Dendritic cell treated with granulocyte-macrophage colony-stimulating factor and Interleukin-4, amounts not matched to agents 40 ng/mL and 50 ng/mL, for 4 days (primary cell): ENCODE measurements at regions of chr4 and their contacts with region 1.

Region 1: DNA sequence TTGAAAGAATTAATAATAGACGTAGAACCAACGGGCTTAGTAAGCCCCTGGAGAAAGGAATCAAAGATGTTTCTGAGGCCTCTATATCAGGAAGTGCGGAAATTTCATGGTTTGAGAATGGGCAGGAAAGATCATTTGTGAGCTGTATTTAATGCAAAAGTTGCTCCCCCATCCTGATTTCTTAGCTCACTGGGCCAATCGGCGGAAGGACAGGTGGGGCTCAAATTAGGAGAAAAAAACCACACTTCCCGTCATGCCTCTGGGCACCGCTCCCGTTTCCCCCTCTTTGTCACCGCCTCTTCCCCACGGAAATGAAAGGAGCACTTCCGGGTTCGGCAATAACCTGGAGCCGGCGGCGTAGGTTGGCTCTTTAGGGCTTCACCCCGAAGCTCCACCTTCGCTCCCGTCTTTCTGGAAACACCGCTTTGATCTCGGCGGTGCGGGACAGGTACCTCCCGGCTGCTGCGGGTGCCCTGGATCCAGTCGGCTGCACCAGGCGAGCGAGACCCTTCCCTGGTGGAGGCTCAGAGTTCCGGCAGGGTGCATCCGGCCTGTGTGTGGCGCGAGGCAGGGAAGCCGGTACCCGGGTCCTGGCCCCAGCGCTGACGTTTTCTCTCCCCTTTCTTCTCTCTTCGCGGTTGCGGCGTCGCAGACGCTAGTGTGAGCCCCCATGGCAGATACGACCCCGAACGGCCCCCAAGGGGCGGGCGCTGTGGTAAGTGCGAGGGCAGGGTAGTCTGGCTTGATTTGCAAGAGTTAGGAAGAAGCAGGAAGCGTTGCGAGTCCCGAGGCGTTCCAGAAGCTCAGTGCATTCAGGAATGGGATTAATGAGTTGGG is at the start of gene TMEM33:
- H3K4me3 Mint-ChIP-seq: peak within 1 kb of the TSS; percentile 94
- H3K27ac Mint-ChIP-seq: peak within 1 kb of the TSS; percentile 95
- H3K4me1 Mint-ChIP-seq: peaks cover 35% of the 10 kb centered on the region
- H3K27me3 Mint-ChIP-seq: no peaks in the 10 kb centered on the region

Region 2: GRCh38 chr4:41990365-41991111 is 55.5 kb after region 1 on chr4 and contains the start of gene SLC30A9:
- intact Hi-C with region 1: loop called (anchors 1 kb)
- H3K4me3 Mint-ChIP-seq: peak within 1 kb of the TSS; percentile 92
- H3K27ac Mint-ChIP-seq: peak within 1 kb of the TSS; percentile 94
- H3K4me1 Mint-ChIP-seq: peaks cover 20% of the 10 kb centered on the region
- H3K27me3 Mint-ChIP-seq: no peaks in the 10 kb centered on the region

Region 3: GRCh38 chr4:42048407-42048806 is 113.4 kb after region 1 on chr4:
- intact Hi-C with region 1: no loop called
- H3K4me3 Mint-ChIP-seq: no peak overlapping the region
- H3K27ac Mint-ChIP-seq: no peak overlapping the region
- H3K4me1 Mint-ChIP-seq: no peaks in the 10 kb centered on the region
- H3K27me3 Mint-ChIP-seq: no peaks in the 10 kb centered on the region

Region 4: GRCh38 chr4:42070463-42070862 is 135.4 kb after region 1 on chr4:
- intact Hi-C with region 1: no loop called
- H3K4me3 Mint-ChIP-seq: no peak overlapping the region
- H3K27ac Mint-ChIP-seq: no peak overlapping the region
- H3K4me1 Mint-ChIP-seq: no peaks in the 10 kb centered on the region
- H3K27me3 Mint-ChIP-seq: no peaks in the 10 kb centered on the region

Region 5: DNA sequence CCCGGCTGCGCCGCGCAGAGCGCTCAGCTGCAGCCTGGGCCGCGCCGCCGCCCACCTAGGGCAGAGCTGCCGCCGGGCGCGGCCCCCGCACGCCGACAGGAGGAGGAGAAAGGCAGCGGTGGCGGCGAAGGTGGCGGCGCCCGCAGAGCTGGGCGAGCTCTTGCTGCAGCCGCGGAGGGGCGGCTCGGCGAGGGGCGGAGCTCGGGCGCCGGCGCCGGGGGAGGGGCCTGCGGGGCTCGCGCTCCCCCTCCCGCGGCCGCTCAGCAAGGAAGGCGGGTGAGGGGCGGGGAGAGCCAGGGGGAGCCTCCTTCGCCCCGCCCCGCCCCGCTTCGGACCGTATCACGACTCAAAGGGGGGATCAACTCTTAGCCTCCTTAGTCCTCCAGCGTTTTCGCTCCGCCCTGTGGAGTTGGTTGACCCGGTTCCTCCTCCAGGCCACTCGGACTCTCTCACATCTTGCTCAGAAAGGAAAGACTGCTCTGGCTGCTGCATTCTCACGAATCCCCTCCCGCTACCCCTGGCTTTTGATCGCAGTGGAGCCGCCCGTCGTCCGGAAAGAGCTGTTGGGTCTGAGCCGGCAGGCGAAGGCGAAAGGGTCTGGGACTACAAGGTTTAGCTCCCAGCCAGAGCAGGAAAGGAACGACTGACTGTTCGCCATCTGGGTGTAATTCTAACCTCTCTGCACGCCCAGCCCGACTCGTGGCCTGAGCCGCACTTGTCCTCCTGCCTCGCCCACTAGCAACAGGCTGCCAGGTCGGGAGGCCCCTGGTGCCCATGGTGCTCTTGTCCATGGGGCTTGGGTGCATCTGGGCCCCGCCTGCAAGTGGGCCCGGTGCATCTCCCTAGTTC is 722.1 kb after region 1 on chr4 and contains the start of gene ATP8A1:
- intact Hi-C with region 1: loop called (anchors 10 kb)
- H3K4me3 Mint-ChIP-seq: peak within 1 kb of the TSS; percentile 96
- H3K27ac Mint-ChIP-seq: peak within 1 kb of the TSS; percentile 100
- H3K4me1 Mint-ChIP-seq: peaks cover 48% of the 10 kb centered on the region
- H3K27me3 Mint-ChIP-seq: no peaks in the 10 kb centered on the region

Region 6: GRCh38 chr4:43271946-43272345 is 1336.9 kb after region 1 on chr4:
- intact Hi-C with region 1: no loop called
- H3K4me3 Mint-ChIP-seq: no peak overlapping the region
- H3K27ac Mint-ChIP-seq: no peak overlapping the region
- H3K4me1 Mint-ChIP-seq: no peaks in the 10 kb centered on the region
- H3K27me3 Mint-ChIP-seq: no peaks in the 10 kb centered on the region